Transverse colon (tissue), 4 donors: ENCODE measurements at regions of chr6 and their contacts with region 1.

Region 1: GRCh38 chr6:13841936-13842335 is 27.6 kb upstream of the MCUR1 start:
- DNase-seq: no peak
- H3K4me3 ChIP-seq: no peak overlapping the region
- H3K27ac ChIP-seq: no peak overlapping the region
- H3K4me1 ChIP-seq: no peaks in the 10 kb centered on the region
- H3K27me3 ChIP-seq: no peaks in the 10 kb centered on the region
- CTCF ChIP-seq: no peak
- EP300 ChIP-seq: no peak
- POLR2A ChIP-seq: no peak

Region 2: GRCh38 chr6:15841937-15842705 is 2000.2 kb after region 1 on chr6:
- in situ Hi-C with region 1: no loop called
- intact Hi-C with region 1: loop called (anchors 5 kb)
- DNase-seq: no peak
- H3K4me3 ChIP-seq: no peak overlapping the region
- H3K27ac ChIP-seq: no peak overlapping the region
- H3K4me1 ChIP-seq: no peaks in the 10 kb centered on the region
- H3K27me3 ChIP-seq: no peaks in the 10 kb centered on the region
- CTCF ChIP-seq: no peak
- EP300 ChIP-seq: no peak
- POLR2A ChIP-seq: no peak